SK-N-SH (cell line): ENCODE measurements at regions of chr2 and their contacts with region 1.

Region 1: GRCh38 chr2:161063157-161063954 is 96.9 kb upstream of the TANK start:
- DNase-seq: peak; percentile 39
- H3K4me3 ChIP-seq: peak overlapping the region in 1 of 2 experiments; percentile 6; a peak in 1 of 4 replicates
- H3K27ac ChIP-seq: no peak overlapping the region
- H3K4me1 ChIP-seq: peaks cover 0 to 5% of the 10 kb centered on the region in 2 experiments; a peak in 1 of 4 replicates
- H3K27me3 ChIP-seq: no peaks in the 10 kb centered on the region
- CTCF ChIP-seq: peak; percentile 92
- EP300 ChIP-seq: no peak
- RAD21 ChIP-seq: peak; percentile 88

Region 2: GRCh38 chr2:160252278-160252887 is 811.0 kb before region 1 on chr2:
- CTCF ChIA-PET with region 1: interaction called, 17 read pairs
- POLR2A ChIA-PET with region 1: no interaction called
- DNase-seq: peak; percentile 51
- H3K4me3 ChIP-seq: no peak overlapping the region
- H3K27ac ChIP-seq: no peak overlapping the region; a peak in 1 of 4 replicates
- H3K4me1 ChIP-seq: peaks cover 0 to 16% of the 10 kb centered on the region in 2 experiments; a peak in 2 of 4 replicates
- H3K27me3 ChIP-seq: no peaks in the 10 kb centered on the region
- CTCF ChIP-seq: peak; percentile 84
- EP300 ChIP-seq: no peak
- RAD21 ChIP-seq: peak; percentile 70

Region 3: GRCh38 chr2:160994141-160995002 is 69.0 kb before region 1 on chr2:
- CTCF ChIA-PET with region 1: interaction called, 23 read pairs
- POLR2A ChIA-PET with region 1: no interaction called
- DNase-seq: peak; percentile 57
- H3K4me3 ChIP-seq: no peak overlapping the region; a peak in 1 of 4 replicates
- H3K27ac ChIP-seq: no peak overlapping the region
- H3K4me1 ChIP-seq: peaks cover 0 to 2% of the 10 kb centered on the region in 2 experiments; a peak in 1 of 4 replicates
- H3K27me3 ChIP-seq: no peaks in the 10 kb centered on the region
- CTCF ChIP-seq: peak; percentile 91
- EP300 ChIP-seq: no peak
- RAD21 ChIP-seq: peak; percentile 96

Region 4: GRCh38 chr2:161045726-161046125 is 17.6 kb before region 1 on chr2:
- CTCF ChIA-PET with region 1: interaction called, 16 read pairs
- POLR2A ChIA-PET with region 1: no interaction called
- DNase-seq: no peak
- H3K4me3 ChIP-seq: no peak overlapping the region
- H3K27ac ChIP-seq: no peak overlapping the region
- H3K4me1 ChIP-seq: no peaks in the 10 kb centered on the region
- H3K27me3 ChIP-seq: peaks cover 8% of the 10 kb centered on the region; the same call in 1 of the 2 replicates
- CTCF ChIP-seq: no peak
- EP300 ChIP-seq: no peak
- RAD21 ChIP-seq: no peak

Region 5: GRCh38 chr2:161077367-161078210 is 14.2 kb after region 1 on chr2:
- CTCF ChIA-PET with region 1: interaction called, 24 read pairs
- POLR2A ChIA-PET with region 1: no interaction called
- DNase-seq: no peak
- H3K4me3 ChIP-seq: no peak overlapping the region
- H3K27ac ChIP-seq: no peak overlapping the region
- H3K4me1 ChIP-seq: no peaks in the 10 kb centered on the region
- H3K27me3 ChIP-seq: no peaks in the 10 kb centered on the region
- CTCF ChIP-seq: no peak
- EP300 ChIP-seq: no peak
- RAD21 ChIP-seq: no peak

Region 6: DNA sequence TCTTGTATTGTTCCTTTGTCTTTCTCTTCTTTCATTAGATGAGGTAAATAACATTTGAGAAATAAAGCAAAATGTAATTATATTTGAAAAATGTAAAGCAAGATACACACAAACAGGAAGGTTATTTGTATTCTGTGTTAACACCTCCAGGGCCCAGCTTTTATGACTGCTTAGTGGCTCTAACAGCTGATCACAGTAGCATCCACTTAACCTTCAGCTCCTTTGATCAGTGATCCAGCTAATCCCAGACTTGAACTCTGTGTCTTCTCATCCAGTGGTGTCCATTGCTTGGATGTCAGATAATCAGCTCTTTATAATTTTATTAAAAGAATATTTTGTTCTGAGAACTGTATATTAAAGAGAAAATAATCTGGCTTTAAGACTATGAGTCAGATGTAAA is 289.4 kb after region 1 on chr2:
- CTCF ChIA-PET with region 1: no interaction called
- POLR2A ChIA-PET with region 1: no interaction called
- DNase-seq: no peak
- H3K4me3 ChIP-seq: no peak overlapping the region
- H3K27ac ChIP-seq: no peak overlapping the region
- H3K4me1 ChIP-seq: peaks cover 0 to 7% of the 10 kb centered on the region in 2 experiments; a peak in 3 of 4 replicates
- H3K27me3 ChIP-seq: no peaks in the 10 kb centered on the region
- CTCF ChIP-seq: no peak
- EP300 ChIP-seq: no peak
- RAD21 ChIP-seq: no peak